ENCODE measurements at regions of chr13 and their contacts with region 1.

Region 1: DNA sequence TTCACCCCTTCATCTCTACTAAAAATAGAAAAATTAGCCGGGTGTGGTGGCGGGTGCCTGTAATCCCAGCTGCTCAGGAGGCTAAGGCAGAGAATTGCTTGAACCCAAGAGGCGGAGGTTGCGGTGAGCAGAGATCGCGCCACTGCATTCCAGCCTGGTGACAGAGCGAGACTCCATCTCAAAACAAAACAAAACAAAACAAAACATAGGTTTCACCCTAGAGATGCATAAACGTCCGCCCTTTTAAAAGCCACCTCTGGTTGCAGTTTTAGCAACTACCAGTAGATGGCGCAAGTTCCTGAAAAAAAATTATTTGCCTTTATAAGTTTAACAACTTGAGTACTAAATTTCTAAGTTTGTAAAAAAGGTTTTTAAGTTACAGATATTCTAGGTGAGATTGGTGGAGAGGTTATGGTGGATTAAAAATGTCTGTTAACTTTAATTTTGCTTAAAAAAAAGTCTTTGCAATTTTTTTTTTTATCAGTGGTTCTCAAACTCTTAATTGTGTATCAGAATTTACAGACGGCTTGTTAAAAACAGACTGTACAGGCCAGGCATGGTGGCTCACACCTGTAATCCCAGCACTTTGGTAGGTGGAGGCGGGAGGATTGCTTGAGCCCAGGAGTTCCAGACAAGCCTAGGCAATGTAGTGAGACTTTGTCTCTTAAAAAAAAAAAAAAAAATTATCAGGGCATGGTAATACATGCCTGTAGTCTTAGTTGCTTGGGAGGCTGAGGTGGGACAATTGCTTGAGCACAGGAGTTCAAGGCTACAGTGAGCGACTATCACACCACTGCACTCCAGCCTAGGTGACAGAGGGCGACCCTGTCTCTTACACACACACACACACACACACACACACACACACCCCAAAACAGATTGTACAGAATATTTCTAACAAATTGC is 42.1 kb downstream of the NAA16 start:
- DNase-seq: peak; percentile 75 to 78 (median 76)
- H3K4me3 ChIP-seq: no peak overlapping the region
- H3K4me3 Mint-ChIP-seq: peak overlapping the region in 7 of 8 donors; percentile 4 to 76 (median 28)
- H3K27ac ChIP-seq: peak overlapping the region; percentile 65
- H3K27ac Mint-ChIP-seq: peak overlapping the region; percentile 79 to 97 (median 92)
- H3K4me1 ChIP-seq: peaks cover 51% of the 10 kb centered on the region
- H3K4me1 Mint-ChIP-seq: peaks cover 37 to 60% (median 47%) of the 10 kb centered on the region in 4 donors
- H3K27me3 ChIP-seq: no peaks in the 10 kb centered on the region
- H3K27me3 Mint-ChIP-seq: no peaks in the 10 kb centered on the region

Region 2: GRCh38 chr13:39655569-39656324 is 1697.4 kb before region 1 on chr13 and contains the start of gene COG6:
- CTCF ChIA-PET with region 1: no interaction called
- POLR2A ChIA-PET with region 1: no interaction called
- intact Hi-C with region 1: no loop called
- DNase-seq: peak; percentile 89 to 95 (median 91)
- H3K4me3 ChIP-seq: peak within 1 kb of the TSS; percentile 77 to 94
- H3K4me3 Mint-ChIP-seq: peak within 1 kb of the TSS; percentile 92 to 99 (median 98)
- H3K27ac ChIP-seq: peak within 1 kb of the TSS; percentile 67
- H3K27ac Mint-ChIP-seq: peak within 1 kb of the TSS; percentile 82 to 98 (median 94)
- H3K4me1 ChIP-seq: peaks cover 17% of the 10 kb centered on the region
- H3K4me1 Mint-ChIP-seq: peaks cover 23 to 45% (median 35%) of the 10 kb centered on the region in 4 donors
- H3K27me3 ChIP-seq: no peaks in the 10 kb centered on the region
- H3K27me3 Mint-ChIP-seq: no peaks in the 10 kb centered on the region
- total RNA-seq, gene COG6: 37.2 to 44.5 TPM

Region 3: DNA sequence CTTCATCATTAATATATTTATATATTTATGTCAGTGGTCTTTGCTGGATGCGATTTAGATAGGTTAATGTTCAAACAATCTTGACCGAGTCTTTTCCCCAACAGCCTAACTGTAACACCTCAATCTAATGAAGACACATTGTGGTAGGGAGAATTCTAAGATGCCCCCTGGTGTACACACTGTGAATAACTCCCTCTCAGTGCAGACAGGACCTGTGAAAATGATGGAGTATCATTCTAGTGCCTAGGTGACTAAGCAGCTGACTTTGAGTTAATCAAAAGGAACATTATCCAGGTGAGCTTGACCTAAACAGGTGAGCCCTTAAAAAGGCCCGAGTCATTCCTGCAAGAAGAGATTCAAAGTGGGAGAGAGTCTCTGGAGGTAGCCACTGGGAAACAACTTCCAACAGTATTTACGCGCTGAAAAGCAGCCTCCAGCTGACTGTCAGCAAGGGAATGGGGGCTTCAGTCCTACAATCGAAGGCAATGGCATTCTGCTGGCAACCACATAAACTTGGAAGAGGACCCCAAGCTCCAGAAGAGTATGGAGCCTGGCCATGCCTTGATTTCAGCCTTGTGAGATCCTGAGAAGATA is 130.8 kb before region 1 on chr13:
- CTCF ChIA-PET with region 1: no interaction called
- POLR2A ChIA-PET with region 1: no interaction called
- intact Hi-C with region 1: no loop called
- DNase-seq: peak; percentile 45 to 52 (median 50)
- H3K4me3 ChIP-seq: no peak overlapping the region
- H3K4me3 Mint-ChIP-seq: no peak overlapping the region
- H3K27ac ChIP-seq: no peak overlapping the region
- H3K27ac Mint-ChIP-seq: no peak overlapping the region
- H3K4me1 ChIP-seq: no peaks in the 10 kb centered on the region
- H3K4me1 Mint-ChIP-seq: peaks cover 0 to 2% (median 0%) of the 10 kb centered on the region in 4 donors
- H3K27me3 ChIP-seq: no peaks in the 10 kb centered on the region
- H3K27me3 Mint-ChIP-seq: no peaks in the 10 kb centered on the region

Region 4: GRCh38 chr13:41384755-41385503 is 31.7 kb after region 1 on chr13:
- CTCF ChIA-PET with region 1: interaction called, 6 read pairs
- POLR2A ChIA-PET with region 1: interaction called, 8 read pairs
- intact Hi-C with region 1: loop called (anchors 1 kb)
- DNase-seq: no peak
- H3K4me3 ChIP-seq: no peak overlapping the region
- H3K4me3 Mint-ChIP-seq: no peak overlapping the region
- H3K27ac ChIP-seq: no peak overlapping the region
- H3K27ac Mint-ChIP-seq: peak overlapping the region in 2 of 7 donors; percentile 3 to 28
- H3K4me1 ChIP-seq: no peaks in the 10 kb centered on the region
- H3K4me1 Mint-ChIP-seq: peaks cover 13 to 36% (median 21%) of the 10 kb centered on the region in 4 donors
- H3K27me3 ChIP-seq: no peaks in the 10 kb centered on the region
- H3K27me3 Mint-ChIP-seq: peaks cover 0 to 1% of the 10 kb centered on the region in 2 donors

Region 5: DNA sequence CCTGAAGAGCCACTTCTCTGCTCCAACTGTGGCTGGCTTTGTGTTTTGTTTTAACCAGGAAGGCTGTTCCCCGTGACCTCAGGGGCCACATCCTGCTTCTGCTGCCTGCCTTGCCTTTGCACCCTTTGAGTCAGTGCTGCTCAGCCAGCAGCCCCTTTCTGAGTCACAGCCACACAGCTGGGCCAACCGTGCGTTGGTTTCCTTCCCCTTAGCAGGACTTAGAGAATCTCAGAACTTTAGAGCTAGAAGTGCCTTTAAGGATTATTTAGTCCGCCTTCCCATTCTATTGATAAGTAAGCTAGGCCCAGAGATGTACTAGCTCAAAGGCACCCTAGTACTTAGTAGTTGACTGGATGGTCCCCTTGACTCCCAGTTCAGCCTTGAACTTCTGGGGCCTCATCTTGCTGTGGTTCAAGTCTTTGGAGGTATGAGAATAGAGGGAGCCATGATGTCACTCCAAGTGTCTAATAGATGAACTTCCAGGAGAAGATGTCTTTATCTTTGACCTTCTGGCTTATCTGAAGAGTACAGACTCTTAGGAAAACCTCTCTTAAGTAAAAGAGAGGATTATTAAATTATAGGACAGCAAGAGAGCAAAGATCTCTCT is 112.2 kb after region 1 on chr13:
- CTCF ChIA-PET with region 1: interaction called, 17 read pairs
- POLR2A ChIA-PET with region 1: interaction called, 53 read pairs
- intact Hi-C with region 1: loop called (anchors 1 kb)
- DNase-seq: peak; percentile 88 to 96 (median 90)
- H3K4me3 ChIP-seq: peak overlapping the region; percentile 11 to 52
- H3K4me3 Mint-ChIP-seq: peak overlapping the region; percentile 88 to 94 (median 92)
- H3K27ac ChIP-seq: peak overlapping the region; percentile 88
- H3K27ac Mint-ChIP-seq: peak overlapping the region; percentile 97 to 100 (median 99)
- H3K4me1 ChIP-seq: peaks cover 93% of the 10 kb centered on the region
- H3K4me1 Mint-ChIP-seq: peaks cover 75 to 98% (median 85%) of the 10 kb centered on the region in 4 donors
- H3K27me3 ChIP-seq: no peaks in the 10 kb centered on the region
- H3K27me3 Mint-ChIP-seq: peaks cover 0 to 3% of the 10 kb centered on the region in 2 donors

Region 6: DNA sequence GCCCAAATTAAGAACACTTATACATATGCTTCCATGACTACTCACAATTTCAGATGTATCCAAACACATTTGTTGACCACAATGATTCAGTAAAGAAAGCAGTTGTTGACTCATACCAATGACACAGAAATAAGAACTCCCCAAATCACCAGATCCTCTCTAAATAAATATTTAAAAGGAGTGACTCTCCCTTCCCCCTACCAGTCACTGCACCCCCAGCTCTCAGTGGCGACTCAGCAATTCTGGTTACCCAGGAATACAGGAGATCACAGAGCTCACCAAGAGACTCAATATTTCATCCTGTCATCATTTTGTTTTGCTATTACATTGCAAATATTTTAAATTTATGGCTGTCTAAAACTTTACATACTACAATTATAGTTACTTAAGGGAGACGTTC is 235.7 kb after region 1 on chr13:
- CTCF ChIA-PET with region 1: no interaction called
- POLR2A ChIA-PET with region 1: no interaction called
- intact Hi-C with region 1: loop called (anchors 5 kb)
- DNase-seq: no peak
- H3K4me3 ChIP-seq: no peak overlapping the region
- H3K4me3 Mint-ChIP-seq: no peak overlapping the region
- H3K27ac ChIP-seq: no peak overlapping the region
- H3K27ac Mint-ChIP-seq: peak overlapping the region in 1 of 7 donors; percentile 15
- H3K4me1 ChIP-seq: no peaks in the 10 kb centered on the region
- H3K4me1 Mint-ChIP-seq: peaks cover 0 to 3% (median 0%) of the 10 kb centered on the region in 4 donors
- H3K27me3 ChIP-seq: no peaks in the 10 kb centered on the region
- H3K27me3 Mint-ChIP-seq: no peaks in the 10 kb centered on the region

Region 7: DNA sequence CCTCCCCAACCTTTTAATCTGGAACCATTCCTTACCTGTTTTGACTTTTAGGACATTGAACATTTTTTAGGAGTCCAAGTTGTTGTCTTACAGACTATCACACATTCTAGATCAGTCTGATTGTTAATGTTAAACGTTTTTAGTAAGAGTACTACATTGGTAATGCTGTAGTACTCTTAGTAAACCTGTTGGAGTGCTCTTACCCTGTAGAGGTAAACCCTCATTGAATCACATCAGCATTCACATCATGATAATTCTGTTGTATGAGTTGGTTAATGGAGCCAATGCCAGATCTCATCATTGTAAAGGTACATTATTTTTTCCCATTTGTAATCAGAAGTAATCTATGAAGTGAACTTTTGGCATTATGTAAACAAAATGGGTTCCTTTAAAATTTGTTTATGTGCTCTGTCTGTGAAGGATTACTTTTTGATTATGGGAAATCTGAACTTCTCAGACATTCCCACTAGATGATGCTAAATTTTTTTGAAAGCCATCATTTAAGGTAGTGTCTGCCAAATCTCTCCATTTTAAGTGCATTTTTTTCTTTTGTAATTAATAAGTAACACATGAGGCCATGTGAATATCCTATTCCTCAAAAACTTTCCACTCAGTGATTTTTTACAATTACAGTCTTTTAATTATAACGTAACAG is 552.5 kb after region 1 on chr13:
- CTCF ChIA-PET with region 1: no interaction called
- POLR2A ChIA-PET with region 1: no interaction called
- intact Hi-C with region 1: loop called (anchors 1 kb)
- DNase-seq: peak in 4 of 5 donors; percentile 37 to 46 (median 44)
- H3K4me3 ChIP-seq: no peak overlapping the region
- H3K4me3 Mint-ChIP-seq: no peak overlapping the region
- H3K27ac ChIP-seq: no peak overlapping the region
- H3K27ac Mint-ChIP-seq: peak overlapping the region in 1 of 7 donors; percentile 65
- H3K4me1 ChIP-seq: no peaks in the 10 kb centered on the region
- H3K4me1 Mint-ChIP-seq: peaks cover 4 to 12% (median 7%) of the 10 kb centered on the region in 4 donors
- H3K27me3 ChIP-seq: no peaks in the 10 kb centered on the region
- H3K27me3 Mint-ChIP-seq: no peaks in the 10 kb centered on the region

Region 8: DNA sequence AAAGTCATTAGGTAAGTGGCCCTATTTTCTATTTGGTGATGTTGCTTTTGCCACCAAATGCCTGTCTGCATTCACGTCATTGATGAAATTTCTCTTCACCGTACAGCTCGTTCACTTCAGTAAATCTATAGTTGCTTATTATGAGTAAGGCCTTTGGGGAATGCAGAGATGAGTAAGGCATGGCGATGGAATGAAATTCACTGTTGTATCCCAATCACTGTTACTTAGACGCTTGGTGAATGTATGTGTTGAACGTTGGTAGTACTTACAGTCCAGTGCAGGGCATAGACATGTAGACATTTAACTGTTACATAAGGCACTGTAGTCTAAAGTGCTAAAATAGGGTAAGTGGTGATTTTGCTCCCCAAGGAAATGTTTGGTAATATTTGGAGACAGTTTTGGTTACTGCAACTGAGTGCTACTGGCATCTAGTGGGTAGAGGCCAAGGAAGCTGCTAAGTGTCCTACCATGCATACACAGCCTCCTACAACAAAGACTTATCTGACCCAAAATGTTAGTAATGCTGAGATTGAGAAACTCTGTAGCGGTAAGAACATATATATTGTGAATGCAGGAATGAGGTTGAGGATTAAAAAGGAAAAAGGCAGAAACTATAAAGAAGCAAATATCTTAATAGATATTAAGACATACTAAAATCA is 924.6 kb after region 1 on chr13:
- CTCF ChIA-PET with region 1: no interaction called
- POLR2A ChIA-PET with region 1: no interaction called
- intact Hi-C with region 1: loop called (anchors 2 kb)
- DNase-seq: no peak
- H3K4me3 ChIP-seq: no peak overlapping the region
- H3K4me3 Mint-ChIP-seq: peak overlapping the region in 7 of 8 donors; percentile 22 to 65 (median 57)
- H3K27ac ChIP-seq: peak overlapping the region; percentile 22
- H3K27ac Mint-ChIP-seq: peak overlapping the region in 6 of 7 donors; percentile 16 to 82 (median 68)
- H3K4me1 ChIP-seq: peaks cover 85% of the 10 kb centered on the region
- H3K4me1 Mint-ChIP-seq: peaks cover 41 to 61% (median 53%) of the 10 kb centered on the region in 4 donors
- H3K27me3 ChIP-seq: no peaks in the 10 kb centered on the region
- H3K27me3 Mint-ChIP-seq: no peaks in the 10 kb centered on the region

Measured in CD4-positive, alpha-beta memory T cell (primary cell).